Panc1 (cell line): ENCODE measurements at regions of chr18 and their contacts with region 1.

Region 1: GRCh38 chr18:63366213-63367052 is 573 bp downstream of the KDSR start:
- DNase-seq: no peak
- ATAC-seq: peak; percentile 58
- H3K4me3 ChIP-seq: peak overlapping the region; percentile 86 to 87
- H3K27ac ChIP-seq: peak overlapping the region; percentile 23
- H3K4me1 ChIP-seq: peaks cover 4% of the 10 kb centered on the region
- H3K27me3 ChIP-seq: no peaks in the 10 kb centered on the region
- CTCF ChIP-seq: no peak

Region 2: GRCh38 chr18:63253428-63254372 is 112.7 kb before region 1 on chr18:
- CTCF ChIA-PET with region 1: no interaction called
- POLR2A ChIA-PET with region 1: no interaction called
- in situ Hi-C with region 1: no loop called
- intact Hi-C with region 1: no loop called
- DNase-seq: no peak
- ATAC-seq: no peak
- H3K4me3 ChIP-seq: no peak overlapping the region
- H3K27ac ChIP-seq: no peak overlapping the region
- H3K4me1 ChIP-seq: no peaks in the 10 kb centered on the region
- H3K27me3 ChIP-seq: no peaks in the 10 kb centered on the region
- CTCF ChIP-seq: no peak

Region 3: GRCh38 chr18:63422087-63422809 is 55.8 kb after region 1 on chr18 and contains the start of gene VPS4B:
- CTCF ChIA-PET with region 1: no interaction called
- POLR2A ChIA-PET with region 1: interaction called, 12 read pairs
- in situ Hi-C with region 1: no loop called
- intact Hi-C with region 1: no loop called
- DNase-seq: peak; percentile 88
- ATAC-seq: peak; percentile 100
- H3K4me3 ChIP-seq: peak within 1 kb of the TSS; percentile 94 to 95
- H3K27ac ChIP-seq: peak within 1 kb of the TSS; percentile 88
- H3K4me1 ChIP-seq: no peaks in the 10 kb centered on the region
- H3K27me3 ChIP-seq: no peaks in the 10 kb centered on the region
- CTCF ChIP-seq: no peak
- total RNA-seq, gene VPS4B: 44.5 TPM